SK-N-SH (cell line): ENCODE measurements at regions of chr10 and their contacts with region 1.

Region 1: DNA sequence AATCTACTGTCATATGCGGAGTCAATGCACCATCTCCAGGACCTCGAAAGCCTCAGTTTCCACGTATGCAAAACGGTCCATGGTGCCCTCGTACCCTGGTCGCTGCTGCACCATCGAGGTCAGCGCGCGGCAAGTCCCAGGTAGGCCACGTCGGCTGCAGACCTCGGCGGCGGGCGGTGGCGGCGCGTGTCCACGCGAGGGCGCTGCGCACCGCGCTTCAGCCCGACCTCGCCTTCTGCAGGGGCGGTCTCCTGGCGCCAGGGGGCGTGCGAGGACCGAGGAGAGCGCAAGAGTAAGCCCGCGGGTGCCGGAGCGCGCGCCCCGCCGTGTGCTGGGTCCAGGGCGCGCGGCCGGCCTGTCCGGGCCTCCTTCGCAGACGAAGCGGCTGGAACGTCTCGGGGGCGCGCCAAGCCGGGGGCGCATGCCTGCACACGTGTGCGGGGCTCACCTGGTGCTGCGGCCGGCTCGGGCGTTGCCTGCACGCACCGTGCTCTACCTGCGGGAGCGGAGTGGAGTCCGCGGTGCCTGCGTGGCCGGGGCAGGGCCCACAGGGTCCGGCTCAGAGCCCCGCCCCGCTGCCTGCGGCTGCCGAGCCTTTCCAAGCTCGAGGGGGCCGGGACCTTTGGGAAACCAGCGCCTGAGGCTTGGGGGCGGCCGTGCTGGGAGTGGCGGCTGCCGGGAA is 54.0 kb downstream of the GLRX3 start:
- DNase-seq: peak; percentile 98
- H3K4me3 ChIP-seq: peak overlapping the region; percentile 52 to 58
- H3K27ac ChIP-seq: no peak overlapping the region
- H3K4me1 ChIP-seq: peaks cover 0 to 23% of the 10 kb centered on the region in 2 experiments; a peak in 1 of 4 replicates
- H3K27me3 ChIP-seq: no peaks in the 10 kb centered on the region
- CTCF ChIP-seq: peak; percentile 90
- EP300 ChIP-seq: no peak
- RAD21 ChIP-seq: peak; percentile 92

Region 2: DNA sequence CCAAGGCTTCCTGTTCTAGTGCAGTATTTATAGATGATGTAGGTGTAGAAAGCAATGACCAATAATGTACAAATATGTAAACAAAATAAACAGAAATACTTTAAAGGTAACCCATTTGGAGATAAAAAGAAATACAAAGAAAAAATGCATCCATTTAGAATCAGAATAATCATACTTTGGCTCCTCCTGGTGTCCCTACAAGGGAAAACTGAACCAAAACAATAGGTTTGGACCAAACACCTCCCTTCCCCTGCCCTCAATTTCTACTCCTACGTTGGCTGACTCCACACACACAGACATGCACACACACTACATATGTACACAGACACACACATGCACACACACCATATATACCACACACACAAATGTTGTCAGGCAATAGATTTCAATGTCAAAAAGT is 115.6 kb before region 1 on chr10:
- CTCF ChIA-PET with region 1: no interaction called
- POLR2A ChIA-PET with region 1: no interaction called
- DNase-seq: no peak
- H3K4me3 ChIP-seq: no peak overlapping the region
- H3K27ac ChIP-seq: no peak overlapping the region
- H3K4me1 ChIP-seq: no peaks in the 10 kb centered on the region
- H3K27me3 ChIP-seq: no peaks in the 10 kb centered on the region
- CTCF ChIP-seq: no peak
- EP300 ChIP-seq: no peak
- RAD21 ChIP-seq: no peak

Region 3: GRCh38 chr10:130200179-130201052 is 10.2 kb after region 1 on chr10:
- CTCF ChIA-PET with region 1: interaction called, 18 read pairs
- POLR2A ChIA-PET with region 1: no interaction called
- DNase-seq: no peak
- H3K4me3 ChIP-seq: no peak overlapping the region
- H3K27ac ChIP-seq: no peak overlapping the region
- H3K4me1 ChIP-seq: no peaks in the 10 kb centered on the region; a peak in 1 of 4 replicates
- H3K27me3 ChIP-seq: no peaks in the 10 kb centered on the region
- CTCF ChIP-seq: no peak
- EP300 ChIP-seq: no peak
- RAD21 ChIP-seq: no peak

Region 4: DNA sequence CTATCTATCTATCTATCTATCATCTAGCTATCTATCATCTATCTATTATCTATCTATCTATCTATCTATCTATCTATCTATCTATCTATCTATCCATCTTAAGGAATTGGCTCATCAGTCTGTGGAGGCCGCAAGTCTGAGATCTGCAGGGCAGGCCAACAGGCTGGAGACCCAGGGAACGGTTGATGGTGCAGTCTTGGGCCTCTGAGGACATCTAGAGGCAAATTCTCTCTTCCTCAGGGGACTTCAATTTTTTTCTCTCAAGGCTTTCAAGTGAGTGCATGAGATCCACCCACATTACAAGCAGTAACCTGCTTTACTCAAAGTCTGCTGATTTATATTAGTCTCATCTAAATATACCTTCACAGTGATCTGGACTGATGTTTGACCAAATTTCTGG is 143.0 kb after region 1 on chr10:
- CTCF ChIA-PET with region 1: interaction called, 35 read pairs
- POLR2A ChIA-PET with region 1: no interaction called
- DNase-seq: no peak
- H3K4me3 ChIP-seq: no peak overlapping the region
- H3K27ac ChIP-seq: no peak overlapping the region
- H3K4me1 ChIP-seq: peaks cover 0 to 4% of the 10 kb centered on the region in 2 experiments; a peak in 1 of 4 replicates
- H3K27me3 ChIP-seq: no peaks in the 10 kb centered on the region
- CTCF ChIP-seq: no peak
- EP300 ChIP-seq: no peak
- RAD21 ChIP-seq: peak; percentile 35; the same call in 1 of the 2 replicates

Region 5: DNA sequence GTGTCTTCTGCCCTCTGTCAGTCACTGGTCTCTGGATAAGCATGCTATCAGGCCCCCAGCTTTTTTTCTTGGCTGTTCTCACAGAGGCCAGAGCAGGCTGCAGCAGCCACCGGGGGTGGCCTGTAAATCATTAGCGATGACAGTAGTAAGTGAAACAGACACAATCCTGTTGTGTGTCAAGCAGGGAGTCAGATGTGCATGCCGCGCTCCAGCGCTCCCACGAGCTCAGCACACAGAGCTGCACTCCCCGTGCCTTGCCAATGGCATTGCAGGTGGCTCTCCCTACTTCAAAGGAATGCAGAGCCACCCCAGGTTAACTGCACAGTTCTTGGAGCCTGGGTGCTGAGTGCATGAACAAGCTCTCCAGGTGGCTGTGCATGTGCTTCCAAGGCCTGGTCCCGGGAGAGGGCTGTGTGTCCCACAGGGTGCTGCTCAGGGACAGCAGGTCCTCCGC is 172.1 kb after region 1 on chr10:
- CTCF ChIA-PET with region 1: interaction called, 14 read pairs
- POLR2A ChIA-PET with region 1: no interaction called
- DNase-seq: peak; percentile 90
- H3K4me3 ChIP-seq: no peak overlapping the region
- H3K27ac ChIP-seq: peak overlapping the region in 1 of 2 experiments; percentile 90; a peak in 2 of 4 replicates
- H3K4me1 ChIP-seq: peaks cover 0 to 47% of the 10 kb centered on the region in 2 experiments; a peak in 2 of 4 replicates
- H3K27me3 ChIP-seq: no peaks in the 10 kb centered on the region
- CTCF ChIP-seq: no peak
- EP300 ChIP-seq: peak in 1 of 2 experiments; percentile 96; a peak in 2 of 4 replicates
- RAD21 ChIP-seq: no peak; the same call in none of the 2 replicates